ENCODE measurements at regions of chr15 and their contacts with region 1.

Region 1: GRCh38 chr15:36769098-36769497 is 189.7 kb downstream of the CDIN1 start:
- DNase-seq: no peak
- H3K4me3 ChIP-seq: no peak overlapping the region
- CTCF ChIP-seq: no peak
- POLR2A ChIP-seq: no peak

Region 2: GRCh38 chr15:36156879-36157427 is 612.1 kb before region 1 on chr15:
- intact Hi-C with region 1: loop called (anchors 10 kb)
- DNase-seq: peak; percentile 58 to 83
- H3K4me3 ChIP-seq: no peak overlapping the region
- CTCF ChIP-seq: no peak
- POLR2A ChIP-seq: no peak

Region 3: DNA sequence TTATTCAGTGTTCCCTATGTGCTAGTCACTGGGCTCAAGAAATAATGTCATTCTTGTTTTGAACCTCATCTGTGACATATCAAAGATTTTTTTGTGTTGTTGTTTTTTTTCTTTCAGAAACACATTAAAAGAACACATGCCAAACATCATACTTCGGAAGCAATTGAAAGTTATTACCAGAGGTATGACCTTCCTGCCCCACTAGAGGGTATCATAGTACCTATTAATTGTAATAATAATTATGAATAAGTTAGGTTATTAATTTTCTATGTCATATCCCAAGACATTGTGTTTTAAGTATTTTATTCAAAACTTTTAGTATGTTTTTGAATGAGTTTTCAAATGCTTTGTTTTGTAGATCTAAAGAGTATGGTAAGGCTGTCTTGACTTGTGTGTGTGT is 124.0 kb before region 1 on chr15:
- intact Hi-C with region 1: no loop called
- DNase-seq: no peak
- H3K4me3 ChIP-seq: no peak overlapping the region
- CTCF ChIP-seq: no peak
- POLR2A ChIP-seq: no peak

Region 4: DNA sequence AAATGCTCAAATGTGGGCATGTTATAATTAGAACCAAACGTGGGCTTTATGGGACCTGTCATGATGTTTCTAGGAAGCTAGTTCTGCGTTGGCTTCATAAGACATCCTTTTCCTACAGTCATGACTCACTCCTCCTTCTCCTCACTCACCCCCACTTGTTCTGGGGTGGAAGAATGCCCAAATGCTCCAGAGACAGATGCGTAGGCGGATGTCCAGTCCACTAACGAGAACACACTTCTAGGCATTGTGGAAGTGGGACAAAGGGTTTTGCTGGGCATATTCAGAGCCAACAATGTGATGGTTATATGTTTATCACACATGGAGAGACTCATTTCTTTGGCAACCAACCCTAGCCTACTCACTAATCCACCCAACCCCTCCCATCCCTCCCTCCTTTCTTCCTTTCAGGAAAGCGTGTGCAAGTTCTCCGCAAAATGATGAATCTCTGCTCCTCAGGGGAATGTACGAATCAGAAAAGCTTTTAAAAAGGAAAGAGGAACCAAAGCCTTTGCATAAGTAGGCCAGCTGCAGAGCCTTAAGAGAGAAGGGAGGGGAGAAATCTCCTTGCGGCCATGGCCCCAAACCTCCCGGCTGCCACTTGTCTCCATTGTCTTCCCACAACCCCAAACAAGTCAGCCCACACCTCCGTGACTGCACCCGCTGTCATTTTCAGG is 1360.6 kb after region 1 on chr15:
- intact Hi-C with region 1: no loop called
- DNase-seq: peak; percentile 85 to 90
- H3K4me3 ChIP-seq: no peak overlapping the region
- CTCF ChIP-seq: no peak
- POLR2A ChIP-seq: no peak